Heart right ventricle (tissue), 16 donors: ENCODE measurements at regions of chr3 and their contacts with region 1.

Region 1: DNA sequence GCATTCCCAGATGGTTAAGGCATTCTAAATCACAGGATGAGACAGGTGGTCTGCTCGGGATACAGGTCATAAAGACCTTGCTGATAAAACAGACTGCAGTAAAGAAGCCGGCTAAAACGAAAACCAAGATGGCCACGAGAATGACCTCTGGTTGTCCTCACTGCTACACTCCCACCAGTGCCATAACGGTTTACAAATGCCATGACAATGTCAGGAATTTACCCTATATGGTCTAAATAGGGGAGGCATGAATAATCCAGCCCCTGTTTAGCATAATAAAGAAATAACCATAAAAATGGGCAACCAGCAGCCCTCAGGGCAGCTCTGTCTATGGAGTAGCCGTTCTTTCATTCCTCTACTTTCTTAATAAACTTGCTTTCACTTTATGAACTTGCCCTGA is 151.1 kb downstream of the ZNF385D start:
- DNase-seq: no peak
- ATAC-seq: no peak
- H3K4me3 ChIP-seq: no peak overlapping the region
- H3K27ac ChIP-seq: no peak overlapping the region
- H3K4me1 ChIP-seq: no peaks in the 10 kb centered on the region
- H3K27me3 ChIP-seq: no peaks in the 10 kb centered on the region
- CTCF ChIP-seq: no peak

Region 2: DNA sequence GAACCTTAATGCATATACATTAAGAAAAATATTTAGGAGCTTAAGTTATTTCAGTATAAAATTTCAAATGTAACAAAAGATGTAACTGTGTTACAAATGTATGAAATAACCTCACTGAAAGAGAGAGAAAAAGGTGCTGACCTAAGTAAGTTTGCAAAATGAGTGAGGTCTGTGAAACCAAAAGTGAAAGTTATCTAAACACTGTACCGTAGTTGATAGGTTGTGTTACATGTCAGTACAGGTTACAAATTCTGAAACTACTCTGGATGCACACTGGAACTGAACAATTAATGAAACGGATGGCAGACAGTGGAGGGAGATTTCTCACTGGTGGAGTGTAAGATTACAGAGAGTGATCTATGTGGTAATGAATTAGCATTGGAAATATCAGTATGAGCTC is 269.6 kb before region 1 on chr3:
- intact Hi-C with region 1: loop called in 1 of 10 experiments (anchors 5 kb)
- DNase-seq: no peak
- ATAC-seq: peak in 1 of 8 donors; percentile 35
- H3K4me3 ChIP-seq: peak overlapping the region in 7 of 10 donors; percentile 8 to 41 (median 31)
- H3K27ac ChIP-seq: no peak overlapping the region
- H3K4me1 ChIP-seq: peaks cover 0 to 31% (median 5%) of the 10 kb centered on the region in 9 donors
- H3K27me3 ChIP-seq: no peaks in the 10 kb centered on the region
- CTCF ChIP-seq: no peak

Region 3: GRCh38 chr3:21435871-21436270 is 164.0 kb before region 1 on chr3:
- intact Hi-C with region 1: no loop called
- DNase-seq: peak in 1 of 2 donors; percentile 12
- ATAC-seq: peak in 5 of 8 donors; percentile 28 to 71 (median 42)
- H3K4me3 ChIP-seq: no peak overlapping the region
- H3K27ac ChIP-seq: no peak overlapping the region
- H3K4me1 ChIP-seq: peaks cover 0 to 10% (median 0%) of the 10 kb centered on the region in 9 donors
- H3K27me3 ChIP-seq: no peaks in the 10 kb centered on the region
- CTCF ChIP-seq: no peak

Region 4: GRCh38 chr3:21462141-21462540 is 137.7 kb before region 1 on chr3:
- intact Hi-C with region 1: no loop called
- DNase-seq: no peak
- ATAC-seq: no peak
- H3K4me3 ChIP-seq: no peak overlapping the region
- H3K27ac ChIP-seq: no peak overlapping the region
- H3K4me1 ChIP-seq: no peaks in the 10 kb centered on the region
- H3K27me3 ChIP-seq: no peaks in the 10 kb centered on the region
- CTCF ChIP-seq: no peak

Region 5: GRCh38 chr3:21487516-21487915 is 112.4 kb before region 1 on chr3:
- intact Hi-C with region 1: no loop called
- DNase-seq: no peak
- ATAC-seq: no peak
- H3K4me3 ChIP-seq: no peak overlapping the region
- H3K27ac ChIP-seq: no peak overlapping the region
- H3K4me1 ChIP-seq: peaks cover 0 to 3% (median 0%) of the 10 kb centered on the region in 9 donors
- H3K27me3 ChIP-seq: no peaks in the 10 kb centered on the region
- CTCF ChIP-seq: no peak